HAP-1 (cell line): ENCODE measurements at regions of chr11 and their contacts with region 1.

Region 1: GRCh38 chr11:2532704-2533586 is 88.1 kb downstream of the KCNQ1 start:
- DNase-seq: peak; percentile 85 to 97
- H3K4me3 ChIP-seq: no peak overlapping the region
- H3K4me1 ChIP-seq: peaks cover 10% of the 10 kb centered on the region
- H3K27me3 ChIP-seq: no peaks in the 10 kb centered on the region

Region 2: DNA sequence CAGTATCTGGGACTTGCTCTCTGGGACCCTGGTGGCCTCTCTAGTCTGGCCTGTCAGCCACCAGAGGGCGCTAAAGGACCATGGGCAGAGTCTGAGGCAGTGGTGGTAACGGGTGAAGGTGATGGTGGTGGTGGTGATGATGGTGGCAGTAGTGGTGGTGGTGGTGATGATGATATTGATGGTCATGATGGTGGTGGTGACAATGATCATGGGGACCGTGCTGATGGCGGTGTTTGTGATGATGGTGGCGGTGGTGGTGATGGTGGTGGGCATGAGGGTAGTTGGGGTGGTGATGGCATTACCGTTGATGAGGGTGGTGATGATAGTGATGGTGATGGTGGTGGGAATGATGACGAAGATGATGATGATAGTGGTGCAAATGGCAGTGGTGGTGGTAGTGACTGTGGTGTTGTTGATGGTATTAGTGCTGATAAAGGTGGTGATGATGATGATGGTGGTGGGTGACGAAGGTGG is 104.6 kb before region 1 on chr11:
- in situ Hi-C with region 1: loop called (anchors 5 kb)
- DNase-seq: peak; percentile 13 to 86
- H3K4me3 ChIP-seq: no peak overlapping the region
- H3K4me1 ChIP-seq: no peaks in the 10 kb centered on the region
- H3K27me3 ChIP-seq: no peaks in the 10 kb centered on the region

Region 3: DNA sequence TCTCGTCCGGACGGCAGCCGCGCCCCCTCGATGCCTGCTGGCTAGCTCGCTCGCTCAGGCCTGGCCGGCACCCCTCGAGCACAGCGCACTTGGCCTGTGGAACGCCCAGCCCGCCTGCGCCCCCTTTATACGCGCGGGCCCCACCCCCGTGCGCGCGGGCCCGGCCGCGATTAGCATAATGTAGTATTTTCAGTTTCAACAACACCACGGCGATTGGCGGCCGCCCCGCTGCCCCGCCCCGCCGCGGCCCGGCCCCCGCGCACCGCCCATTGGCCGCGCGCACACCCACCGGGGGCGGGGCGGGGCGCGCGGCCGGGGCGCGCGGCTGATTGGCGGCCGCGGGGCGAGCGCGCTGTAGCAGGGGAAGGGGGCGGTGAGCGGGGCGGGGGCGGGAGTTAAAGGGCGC is 352.7 kb after region 1 on chr11 and contains the start of gene CDKN1C:
- in situ Hi-C with region 1: loop called (anchors 5 kb)
- DNase-seq: peak; percentile 73 to 91
- H3K4me3 ChIP-seq: peak within 1 kb of the TSS; percentile 48
- H3K4me1 ChIP-seq: peaks cover 7% of the 10 kb centered on the region
- H3K27me3 ChIP-seq: no peaks in the 10 kb centered on the region

Region 4: GRCh38 chr11:3929649-3930048 is 1396.7 kb after region 1 on chr11:
- in situ Hi-C with region 1: no loop called
- DNase-seq: no peak
- H3K4me3 ChIP-seq: no peak overlapping the region
- H3K4me1 ChIP-seq: no peaks in the 10 kb centered on the region
- H3K27me3 ChIP-seq: no peaks in the 10 kb centered on the region